Endothelial cell of umbilical vein (primary cell): ENCODE measurements at regions of chr6 and their contacts with region 1.

Region 1: DNA sequence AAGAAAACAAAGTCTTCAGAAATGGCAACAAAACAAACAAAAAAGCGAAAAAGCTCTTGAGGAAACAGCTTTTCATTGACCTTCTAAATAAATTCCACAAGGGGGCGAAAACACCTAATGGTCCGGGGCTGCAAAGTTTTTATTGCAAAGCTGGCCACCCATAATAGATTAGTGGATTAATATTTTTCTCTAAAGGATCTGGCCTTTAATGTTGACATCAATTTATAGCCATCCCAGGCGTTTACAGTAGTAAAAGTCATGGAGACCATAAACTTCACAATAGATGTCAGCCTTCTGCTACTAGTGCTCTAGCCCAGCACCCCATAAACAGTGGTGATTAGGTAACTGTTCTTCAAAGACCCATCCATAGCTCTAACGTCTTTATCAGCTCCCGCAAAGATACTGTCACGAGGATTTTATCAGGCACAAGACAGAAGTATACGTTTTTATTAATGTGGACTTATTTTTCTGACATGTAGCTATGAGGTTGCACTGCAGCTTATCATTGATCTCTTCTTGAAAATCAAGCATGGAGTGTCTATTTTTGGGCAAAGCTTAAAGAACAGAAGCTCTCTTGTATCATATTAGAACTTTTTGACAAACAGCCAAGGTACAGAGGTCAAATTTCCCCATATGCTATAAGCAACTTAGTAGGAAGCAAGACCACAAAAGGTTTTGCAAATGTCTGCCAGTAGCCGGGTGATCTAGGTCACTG is 4.7 kb downstream of the CITED2 start:
- DNase-seq: peak; percentile 68
- H3K4me3 ChIP-seq: no peak overlapping the region
- H3K27ac ChIP-seq: no peak overlapping the region
- H3K4me1 ChIP-seq: peaks cover 41% of the 10 kb centered on the region
- H3K27me3 ChIP-seq: no peaks in the 10 kb centered on the region
- CTCF ChIP-seq: peak; percentile 43 to 46
- POLR2A ChIP-seq: no peak

Region 2: DNA sequence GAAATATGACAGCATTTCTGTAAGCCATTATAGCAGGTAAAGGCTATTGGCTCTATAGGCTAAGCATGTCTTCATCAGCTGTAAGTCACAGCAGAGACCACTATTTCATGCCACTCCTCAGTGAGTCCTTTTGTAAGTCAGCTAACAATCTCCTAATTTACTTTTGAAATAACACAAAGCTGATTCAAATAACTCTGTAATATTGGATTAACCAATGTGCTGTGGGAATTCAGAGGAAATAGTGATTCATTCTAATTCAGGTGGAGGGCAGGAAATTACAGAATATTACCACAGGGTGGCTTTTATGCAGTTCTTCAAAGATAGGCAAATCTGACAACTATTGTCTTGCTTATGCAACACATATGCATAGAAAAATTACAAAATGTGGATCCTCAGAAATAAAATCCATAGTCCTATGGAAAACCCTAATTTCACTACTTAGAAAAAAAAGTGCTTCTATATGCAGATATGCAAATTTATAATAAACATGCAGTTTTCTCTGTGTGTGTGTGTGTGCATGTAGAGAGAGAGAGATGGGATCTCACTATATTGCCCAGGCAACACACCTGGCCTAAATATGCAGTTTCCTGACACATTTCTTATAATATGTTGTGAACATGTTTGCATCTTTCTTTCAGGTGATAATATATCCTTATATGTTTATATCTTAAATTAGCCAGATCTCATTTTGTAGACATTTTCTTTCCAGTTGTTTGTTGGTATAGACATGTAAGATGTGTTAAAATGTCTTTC is 996.8 kb before region 1 on chr6:
- CTCF ChIA-PET with region 1: no interaction called
- POLR2A ChIA-PET with region 1: no interaction called
- dilution Hi-C with region 1: no loop called
- intact Hi-C with region 1: no loop called
- DNase-seq: peak; percentile 79
- H3K4me3 ChIP-seq: no peak overlapping the region
- H3K27ac ChIP-seq: peak overlapping the region; percentile 35
- H3K4me1 ChIP-seq: peaks cover 23% of the 10 kb centered on the region
- H3K27me3 ChIP-seq: no peaks in the 10 kb centered on the region
- CTCF ChIP-seq: peak in 1 of 2 donors; percentile 11
- POLR2A ChIP-seq: no peak

Region 3: DNA sequence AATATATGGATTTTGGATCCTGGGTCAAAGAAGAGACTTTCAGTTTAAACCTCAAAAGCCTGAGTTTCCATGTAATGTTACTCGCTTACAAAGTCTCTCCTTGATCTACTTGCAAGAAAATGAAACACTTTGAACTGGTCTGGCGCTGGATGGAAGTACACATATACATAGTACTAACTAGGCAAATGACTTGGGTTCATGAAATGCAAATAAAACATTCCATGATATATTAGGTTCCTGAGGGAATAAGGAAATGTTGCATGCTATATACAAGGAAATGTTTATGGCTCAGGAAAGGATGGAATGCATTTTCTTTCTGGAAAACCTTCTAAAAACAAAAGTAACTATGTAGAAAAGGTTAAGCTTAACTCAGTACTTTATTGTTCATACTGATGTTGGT is 66.5 kb before region 1 on chr6:
- CTCF ChIA-PET with region 1: no interaction called
- POLR2A ChIA-PET with region 1: no interaction called
- dilution Hi-C with region 1: no loop called
- intact Hi-C with region 1: no loop called
- DNase-seq: peak; percentile 23
- H3K4me3 ChIP-seq: no peak overlapping the region
- H3K27ac ChIP-seq: no peak overlapping the region
- H3K4me1 ChIP-seq: no peaks in the 10 kb centered on the region
- H3K27me3 ChIP-seq: no peaks in the 10 kb centered on the region
- CTCF ChIP-seq: no peak
- POLR2A ChIP-seq: no peak

Region 4: DNA sequence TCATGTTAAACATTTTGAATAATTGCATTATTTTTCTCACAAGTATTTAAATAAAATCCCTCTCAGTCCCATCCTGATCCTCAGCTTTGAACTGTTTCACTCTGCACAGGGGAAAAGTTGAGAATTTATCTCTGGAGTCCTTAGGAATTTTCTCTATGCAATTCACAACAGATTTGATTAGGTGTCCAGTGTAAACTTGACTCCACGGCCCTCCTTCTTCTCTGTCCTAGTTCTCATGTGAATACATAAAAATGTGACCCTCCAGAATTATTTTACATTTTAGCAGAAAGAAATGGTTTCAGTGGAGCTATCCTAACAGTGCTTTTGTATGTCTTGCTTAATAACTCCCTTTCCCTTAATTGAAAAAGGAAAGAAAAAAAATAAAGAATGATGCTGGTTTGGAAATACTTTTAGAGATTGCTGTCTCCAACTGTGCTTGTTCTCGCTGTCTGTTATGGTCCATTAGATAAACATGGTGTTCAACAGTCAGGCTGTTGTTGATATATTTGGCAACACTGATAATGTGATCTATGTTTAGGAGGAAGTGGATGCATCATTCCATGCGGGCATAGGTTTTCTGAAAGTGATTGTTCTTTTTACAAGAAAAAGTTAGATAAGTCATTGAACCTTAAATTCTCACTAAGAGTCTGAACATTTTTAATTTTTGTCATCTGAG is 604.1 kb after region 1 on chr6:
- CTCF ChIA-PET with region 1: interaction called, 5 read pairs
- POLR2A ChIA-PET with region 1: interaction called, 5 read pairs
- dilution Hi-C with region 1: no loop called
- intact Hi-C with region 1: loop called (anchors 1 kb)
- DNase-seq: peak; percentile 90
- H3K4me3 ChIP-seq: no peak overlapping the region
- H3K27ac ChIP-seq: peak overlapping the region; percentile 49
- H3K4me1 ChIP-seq: peaks cover 12% of the 10 kb centered on the region
- H3K27me3 ChIP-seq: no peaks in the 10 kb centered on the region
- CTCF ChIP-seq: no peak
- POLR2A ChIP-seq: no peak

Region 5: GRCh38 chr6:140052756-140053729 is 683.3 kb after region 1 on chr6:
- CTCF ChIA-PET with region 1: interaction called, 49 read pairs
- POLR2A ChIA-PET with region 1: interaction called, 17 read pairs
- dilution Hi-C with region 1: no loop called
- intact Hi-C with region 1: no loop called
- DNase-seq: peak; percentile 26
- H3K4me3 ChIP-seq: no peak overlapping the region
- H3K27ac ChIP-seq: no peak overlapping the region
- H3K4me1 ChIP-seq: peaks cover 7% of the 10 kb centered on the region
- H3K27me3 ChIP-seq: no peaks in the 10 kb centered on the region
- CTCF ChIP-seq: peak; percentile 16 to 31
- POLR2A ChIP-seq: no peak

Region 6: DNA sequence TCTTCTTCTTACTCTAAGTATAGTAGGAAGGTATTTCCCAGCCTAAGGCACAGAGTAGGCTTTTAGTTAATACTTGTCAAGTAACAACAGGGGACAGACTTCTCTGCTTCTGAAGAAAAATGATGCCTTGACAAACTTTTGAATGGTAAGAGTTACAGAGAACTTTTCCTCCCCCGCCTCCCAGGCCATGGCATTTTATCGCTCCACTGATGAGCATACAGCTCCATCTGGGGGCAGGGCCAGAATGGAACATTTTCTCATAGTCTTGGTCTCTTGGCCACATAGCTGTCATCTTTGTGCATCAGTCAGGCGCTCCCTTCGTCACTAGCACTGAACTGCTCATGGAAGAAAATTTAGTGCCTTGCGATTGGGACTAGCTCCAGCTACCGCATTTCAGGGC is 1071.5 kb after region 1 on chr6:
- CTCF ChIA-PET with region 1: interaction called, 26 read pairs
- POLR2A ChIA-PET with region 1: interaction called, 3 read pairs
- dilution Hi-C with region 1: no loop called
- intact Hi-C with region 1: loop called (anchors 1 kb)
- DNase-seq: peak; percentile 57
- H3K4me3 ChIP-seq: no peak overlapping the region
- H3K27ac ChIP-seq: no peak overlapping the region
- H3K4me1 ChIP-seq: peaks cover 18% of the 10 kb centered on the region
- H3K27me3 ChIP-seq: no peaks in the 10 kb centered on the region
- CTCF ChIP-seq: peak; percentile 27 to 40
- POLR2A ChIP-seq: no peak